Naive thymus-derived CD8-positive, alpha-beta T cell (primary cell): ENCODE measurements at regions of chr10 and their contacts with region 1.

Region 1: DNA sequence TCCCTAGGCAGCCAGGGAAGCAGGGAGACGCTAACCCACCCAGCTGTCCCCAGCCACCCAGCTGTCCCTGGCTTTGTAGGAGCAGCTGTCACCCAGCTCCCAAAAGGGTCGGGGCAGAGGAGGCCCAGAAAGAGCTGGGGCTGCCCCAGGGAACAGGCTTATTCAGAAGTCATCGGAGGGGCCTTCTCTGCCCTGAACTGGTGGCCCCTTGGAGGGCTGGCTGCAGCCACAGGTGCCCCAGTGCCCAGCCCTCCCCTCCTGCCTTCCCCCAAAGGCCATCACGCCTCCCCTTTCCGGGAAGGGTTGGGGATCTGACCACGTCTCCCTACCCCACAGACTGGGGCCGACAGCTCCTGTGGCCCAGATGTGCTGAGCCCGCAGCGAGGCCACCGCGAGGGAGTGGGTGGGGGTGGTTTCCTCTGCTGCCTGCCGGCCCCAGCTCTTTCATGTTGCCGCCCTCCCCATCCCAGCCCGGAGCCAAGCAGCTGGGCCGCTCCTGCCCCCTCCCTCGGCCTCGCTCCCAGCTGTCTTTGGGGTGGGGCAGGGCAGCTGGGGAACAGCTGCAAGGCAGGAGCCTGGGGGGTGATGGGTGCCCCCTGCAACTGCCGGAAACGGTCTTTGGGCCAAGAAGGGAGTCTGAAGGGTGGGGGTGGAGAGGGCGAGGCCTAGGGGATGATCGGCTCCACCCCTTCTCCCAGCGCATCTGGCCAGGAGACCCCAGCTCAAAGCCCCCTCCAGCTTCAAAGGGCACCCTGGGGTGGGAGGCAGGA is 16.8 kb downstream of the TRIM8 start:
- DNase-seq: peak in 8 of 10 donors; percentile 37 to 55 (median 52)
- ATAC-seq: peak; percentile 79 to 84
- H3K4me3 Mint-ChIP-seq: peak overlapping the region; percentile 50 to 81 (median 64)
- H3K27ac Mint-ChIP-seq: peak overlapping the region; percentile 75 to 92 (median 86)
- H3K4me1 Mint-ChIP-seq: peaks cover 13 to 56% (median 45%) of the 10 kb centered on the region in 4 donors
- H3K27me3 Mint-ChIP-seq: no peaks in the 10 kb centered on the region

Region 2: DNA sequence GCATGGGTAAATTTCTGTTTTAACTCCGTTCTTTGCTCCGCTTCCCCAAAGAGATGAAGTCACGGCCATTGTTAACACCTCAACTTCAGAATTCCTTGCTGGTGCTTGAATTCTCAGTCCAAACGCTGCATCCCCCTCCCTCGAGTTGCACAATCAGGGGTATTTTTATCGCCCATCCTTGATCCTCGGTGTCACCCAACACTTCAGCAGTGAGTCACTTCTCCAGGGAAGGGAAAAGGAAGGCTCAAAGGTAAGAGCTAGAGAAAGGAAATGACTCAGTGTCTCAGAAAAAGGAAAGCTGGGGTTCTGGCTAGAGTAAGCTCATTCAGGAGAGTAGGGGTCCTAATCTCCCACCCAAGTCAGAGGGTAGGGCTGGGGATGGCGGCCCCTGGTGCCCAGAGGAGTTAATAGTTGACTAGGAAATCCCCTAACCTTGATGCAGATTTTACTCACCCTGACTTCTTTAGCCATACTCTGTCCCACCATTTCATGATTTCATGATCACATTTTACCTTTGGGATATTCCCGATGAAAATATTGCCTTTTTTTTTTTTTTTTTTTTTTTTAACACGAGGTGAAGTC is 56.6 kb before region 1 on chr10:
- POLR2A ChIA-PET with region 1: no interaction called
- DNase-seq: no peak
- ATAC-seq: no peak
- H3K4me3 Mint-ChIP-seq: no peak overlapping the region
- H3K27ac Mint-ChIP-seq: no peak overlapping the region
- H3K4me1 Mint-ChIP-seq: peaks cover 0 to 2% (median under 1%) of the 10 kb centered on the region in 4 donors
- H3K27me3 Mint-ChIP-seq: no peaks in the 10 kb centered on the region

Region 3: DNA sequence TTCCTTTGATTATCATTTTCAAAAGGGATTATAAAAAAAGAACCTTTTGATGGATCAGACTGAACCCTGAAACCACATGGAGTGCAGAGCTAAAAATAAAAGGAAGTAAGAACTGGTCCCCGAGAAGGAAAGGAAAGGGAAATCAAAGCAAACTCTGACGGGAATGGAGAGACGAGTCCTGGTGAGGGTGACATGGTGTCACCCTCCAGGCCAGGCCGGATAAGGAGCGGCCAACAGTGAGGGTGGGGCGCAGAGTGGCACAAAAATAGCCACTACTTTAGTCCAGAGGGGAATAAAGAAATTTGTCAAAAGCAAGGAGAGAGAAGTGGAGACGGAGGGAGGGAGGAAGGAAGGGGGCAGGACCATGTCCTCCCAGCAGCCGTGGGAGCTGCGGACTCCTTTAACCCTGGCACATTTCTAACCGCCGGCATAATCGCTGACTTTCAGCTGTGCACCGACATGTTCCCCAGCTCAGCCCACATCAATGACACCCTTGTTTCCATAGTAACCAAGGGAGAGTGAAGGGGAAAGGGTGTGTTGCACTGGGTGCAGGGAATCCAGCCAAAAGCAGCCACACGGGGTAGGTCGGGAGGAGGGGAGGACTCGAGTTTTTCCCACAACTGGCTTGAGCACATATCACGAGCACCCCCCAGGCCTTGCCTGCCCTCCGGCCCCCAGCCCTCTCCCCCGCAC is 12.9 kb after region 1 on chr10:
- POLR2A ChIA-PET with region 1: interaction called, 624 read pairs
- DNase-seq: peak; percentile 50 to 92 (median 85)
- ATAC-seq: peak; percentile 87 to 95
- H3K4me3 Mint-ChIP-seq: peak overlapping the region; percentile 75 to 91 (median 87)
- H3K27ac Mint-ChIP-seq: peak overlapping the region; percentile 90 to 98 (median 96)
- H3K4me1 Mint-ChIP-seq: peaks cover 23 to 83% (median 62%) of the 10 kb centered on the region in 4 donors
- H3K27me3 Mint-ChIP-seq: no peaks in the 10 kb centered on the region

Region 4: DNA sequence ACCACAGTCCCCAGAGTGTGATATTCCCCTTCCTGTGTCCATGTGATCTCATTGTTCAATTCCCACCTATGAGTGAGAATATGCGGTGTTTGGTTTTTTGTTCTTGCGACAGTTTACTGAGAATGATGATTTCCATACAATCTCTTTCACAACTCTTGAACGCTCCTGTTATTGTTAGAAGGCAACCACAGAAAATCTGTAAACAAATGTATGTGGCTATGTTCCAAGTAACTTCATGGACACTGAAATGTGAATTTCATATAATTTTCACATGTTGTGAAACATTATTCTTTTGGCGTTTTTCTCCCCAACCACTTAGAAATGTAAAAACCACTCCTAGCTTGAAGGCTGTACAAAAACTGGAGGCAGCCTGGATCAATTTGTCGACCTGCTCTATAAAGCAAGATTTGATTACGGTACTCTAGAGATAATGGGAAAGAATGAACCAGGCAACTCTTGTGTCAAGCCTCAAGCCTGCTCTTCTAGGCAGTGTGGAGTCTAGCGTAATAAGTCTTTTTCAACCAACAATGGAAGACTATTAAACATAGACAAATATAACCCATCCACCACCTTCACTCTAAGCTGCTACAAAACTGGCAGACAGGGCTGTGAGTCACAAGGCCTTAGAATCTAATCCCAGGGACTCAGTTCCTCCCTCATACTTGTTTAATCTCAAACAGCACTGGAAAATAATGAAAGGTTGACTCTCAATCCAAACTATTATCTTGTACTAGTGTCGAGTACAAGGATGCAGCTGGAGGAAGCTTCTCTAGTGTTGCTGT is 30.4 kb after region 1 on chr10:
- POLR2A ChIA-PET with region 1: no interaction called
- DNase-seq: no peak
- ATAC-seq: no peak
- H3K4me3 Mint-ChIP-seq: no peak overlapping the region
- H3K27ac Mint-ChIP-seq: no peak overlapping the region
- H3K4me1 Mint-ChIP-seq: no peaks in the 10 kb centered on the region
- H3K27me3 Mint-ChIP-seq: no peaks in the 10 kb centered on the region